ENCODE measurements at regions of chr6 and their contacts with region 1.

Region 1: DNA sequence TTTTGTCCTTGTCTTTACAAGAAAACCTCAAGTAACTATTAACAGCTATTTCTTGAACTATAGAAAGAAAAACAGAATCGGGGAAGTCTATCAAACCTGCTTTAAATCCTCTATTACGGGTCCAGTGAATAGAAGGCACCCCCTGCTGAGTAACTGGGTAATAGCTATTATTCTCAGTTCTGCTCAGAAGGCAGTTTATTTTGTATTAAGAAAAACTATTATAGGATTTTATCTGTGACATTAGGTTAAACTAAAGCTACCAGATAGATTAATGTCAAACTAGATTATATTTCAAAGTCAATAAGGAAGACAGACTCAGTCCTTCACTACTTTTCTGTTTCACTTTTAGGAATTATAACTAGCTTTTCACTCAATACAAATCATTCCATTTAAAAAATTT is 93.7 kb downstream of the DST start:
- DNase-seq: no peak
- ATAC-seq: peak; percentile 58; the same call in 2 of the 3 replicates
- H3K4me3 ChIP-seq: no peak overlapping the region
- H3K27ac ChIP-seq: no peak overlapping the region
- H3K4me1 ChIP-seq: peaks cover 17% of the 10 kb centered on the region
- H3K27me3 ChIP-seq: no peaks in the 10 kb centered on the region
- CTCF ChIP-seq: peak; percentile 47
- EP300 ChIP-seq: no peak
- POLR2A ChIP-seq: no peak
- RAD21 ChIP-seq: no peak

Region 2: GRCh38 chr6:56437171-56437900 is 111.7 kb before region 1 on chr6:
- CTCF ChIA-PET with region 1: no interaction called
- POLR2A ChIA-PET with region 1: no interaction called
- in situ Hi-C with region 1: no loop called
- intact Hi-C with region 1: no loop called
- DNase-seq: no peak
- ATAC-seq: no peak
- H3K4me3 ChIP-seq: no peak overlapping the region
- H3K27ac ChIP-seq: no peak overlapping the region
- H3K4me1 ChIP-seq: peaks cover 8% of the 10 kb centered on the region; the same call in 1 of the 2 replicates
- H3K27me3 ChIP-seq: no peaks in the 10 kb centered on the region
- CTCF ChIP-seq: no peak
- EP300 ChIP-seq: no peak
- POLR2A ChIP-seq: no peak
- RAD21 ChIP-seq: no peak

Region 3: DNA sequence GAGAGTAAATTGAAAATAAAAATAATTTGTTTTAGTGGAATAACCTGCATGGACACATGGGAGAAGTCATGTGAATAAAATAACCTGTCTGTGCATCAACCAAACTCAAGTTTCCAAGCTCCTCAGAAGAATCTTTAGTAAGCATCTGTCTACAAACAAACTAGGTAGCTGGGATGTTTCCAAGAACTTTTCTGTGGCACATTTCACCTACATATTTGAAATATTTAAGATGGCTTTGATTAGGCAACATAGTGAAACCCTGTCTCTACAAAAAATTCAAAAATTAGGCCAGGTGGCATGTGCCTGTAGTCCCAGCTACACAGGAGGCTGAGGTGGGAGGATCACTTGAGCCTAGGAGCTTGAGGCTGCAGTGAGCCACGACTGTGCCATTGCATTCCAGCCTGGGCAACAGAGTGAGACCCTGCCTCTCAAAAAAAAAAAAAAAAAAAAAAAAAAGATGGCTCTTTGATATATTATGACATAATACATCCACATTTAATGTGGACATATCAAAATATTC is 74.4 kb before region 1 on chr6:
- CTCF ChIA-PET with region 1: no interaction called
- POLR2A ChIA-PET with region 1: no interaction called
- in situ Hi-C with region 1: no loop called
- intact Hi-C with region 1: loop called (anchors 5 kb)
- DNase-seq: no peak
- ATAC-seq: no peak
- H3K4me3 ChIP-seq: no peak overlapping the region
- H3K27ac ChIP-seq: no peak overlapping the region
- H3K4me1 ChIP-seq: no peaks in the 10 kb centered on the region
- H3K27me3 ChIP-seq: no peaks in the 10 kb centered on the region
- CTCF ChIP-seq: no peak
- EP300 ChIP-seq: no peak
- POLR2A ChIP-seq: no peak
- RAD21 ChIP-seq: no peak